BJ (cell line): ENCODE measurements at regions of chr20 and their contacts with region 1.

Region 1: GRCh38 chr20:10673988-10674711 is at the start of gene JAG1:
- DNase-seq: peak; percentile 60
- H3K4me3 ChIP-seq: peak within 1 kb of the TSS; percentile 52
- H3K27me3 ChIP-seq: 0 out of 2 replicates have a peak, but pooled peaks cover 2% of the 10 kb centered on the region
- CTCF ChIP-seq: no peak
- polyA plus RNA-seq, gene JAG1: 10.6 and 19.9 TPM in 2 replicates

Region 2: GRCh38 chr20:10487142-10488136 is 186.7 kb before region 1 on chr20:
- CTCF ChIA-PET with region 1: no interaction called
- POLR2A ChIA-PET with region 1: no interaction called
- DNase-seq: no peak
- H3K4me3 ChIP-seq: no peak overlapping the region
- H3K27me3 ChIP-seq: no peaks in the 10 kb centered on the region
- CTCF ChIP-seq: no peak

Region 3: DNA sequence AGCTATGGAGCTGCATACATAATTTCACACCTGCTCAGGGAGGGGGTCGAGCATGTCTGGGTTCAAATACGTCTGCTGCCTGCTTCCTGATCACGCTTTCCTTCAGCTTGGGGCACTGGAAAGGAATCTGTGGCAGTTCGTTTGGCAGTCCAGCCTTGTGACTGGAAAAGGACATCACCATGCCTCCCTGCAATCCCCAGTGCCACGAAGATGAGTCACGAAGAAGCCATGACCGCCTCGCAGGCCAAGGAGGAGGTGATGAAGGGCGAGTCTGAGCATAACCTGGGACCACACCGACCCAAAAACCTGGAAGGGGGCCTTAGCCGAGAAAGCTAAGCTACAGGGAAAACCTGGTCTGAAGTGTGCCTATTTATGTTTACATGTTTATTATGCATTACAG is 13.5 kb before region 1 on chr20:
- CTCF ChIA-PET with region 1: interaction called, 16 read pairs
- POLR2A ChIA-PET with region 1: no interaction called
- DNase-seq: no peak
- H3K4me3 ChIP-seq: no peak overlapping the region
- H3K27me3 ChIP-seq: no peaks in the 10 kb centered on the region
- CTCF ChIP-seq: no peak

Region 4: GRCh38 chr20:10686356-10687133 is 12.4 kb after region 1 on chr20:
- CTCF ChIA-PET with region 1: interaction called, 17 read pairs
- POLR2A ChIA-PET with region 1: no interaction called
- DNase-seq: no peak
- H3K4me3 ChIP-seq: no peak overlapping the region
- H3K27me3 ChIP-seq: peaks cover 3% of the 10 kb centered on the region
- CTCF ChIP-seq: no peak